ENCODE measurements at regions of chr15 and their contacts with region 1.

Region 1: DNA sequence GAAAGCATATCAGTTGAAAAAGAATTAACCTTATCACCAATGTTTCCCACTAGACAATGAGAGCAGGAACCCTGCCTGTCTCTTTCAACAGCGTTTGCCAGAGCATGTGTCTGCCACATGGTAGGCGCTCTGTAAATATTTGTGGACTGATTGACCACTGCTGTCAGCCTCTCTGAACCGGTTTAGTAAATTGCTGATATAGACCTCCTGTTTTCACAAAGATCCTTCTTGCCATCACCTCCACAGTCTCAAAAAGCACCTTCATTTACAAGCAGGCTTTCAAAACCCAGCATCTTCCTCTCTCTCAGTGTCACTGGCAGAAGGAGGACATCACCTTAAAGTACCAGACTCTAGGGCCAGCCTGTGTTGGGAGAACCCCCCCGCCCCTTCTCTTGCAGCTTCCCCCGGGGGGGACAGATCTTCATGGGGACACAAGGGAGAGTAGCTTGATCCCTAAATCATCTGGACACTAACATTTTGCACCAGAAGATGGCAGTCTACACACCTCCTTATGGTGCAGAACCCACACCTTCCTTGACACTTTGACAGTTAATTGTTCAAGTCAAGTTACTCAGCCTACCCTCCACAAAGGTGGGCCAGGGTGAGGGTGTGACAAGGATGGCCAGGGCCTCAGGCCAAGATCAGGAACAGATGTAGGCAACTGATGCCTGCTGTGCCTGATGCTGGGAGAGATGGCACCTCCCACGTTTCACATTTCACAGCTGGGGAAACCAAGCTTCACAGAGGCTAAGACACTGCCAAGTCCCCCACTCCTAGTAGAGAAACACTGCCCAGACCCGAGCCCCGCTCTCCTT is 37.8 kb upstream of the USP3 start:
- DNase-seq: peak; percentile 70
- ATAC-seq: peak; percentile 78
- H3K4me3 ChIP-seq: no peak overlapping the region
- H3K27ac ChIP-seq: no peak overlapping the region
- H3K4me1 ChIP-seq: peaks cover 16% of the 10 kb centered on the region
- H3K27me3 ChIP-seq: peaks cover 4% of the 10 kb centered on the region
- CTCF ChIP-seq: peak; percentile 69
- POLR2A ChIP-seq: 0 out of 2 replicates have a peak, but pooled peaks have one; percentile 33
- RAD21 ChIP-seq: peak; percentile 81

Region 2: GRCh38 chr15:63288778-63289378 is 177.7 kb before region 1 on chr15:
- CTCF ChIA-PET with region 1: interaction called, 3 read pairs
- POLR2A ChIA-PET with region 1: no interaction called
- dilution Hi-C with region 1: no loop called
- in situ Hi-C with region 1: no loop called
- intact Hi-C with region 1: loop called (anchors 5 kb)
- DNase-seq: peak; percentile 69
- ATAC-seq: peak; percentile 68
- H3K4me3 ChIP-seq: no peak overlapping the region
- H3K27ac ChIP-seq: no peak overlapping the region
- H3K4me1 ChIP-seq: peaks cover 2% of the 10 kb centered on the region; the same call in 1 of the 2 replicates
- H3K27me3 ChIP-seq: no peaks in the 10 kb centered on the region
- CTCF ChIP-seq: peak; percentile 86
- POLR2A ChIP-seq: no peak
- RAD21 ChIP-seq: peak; percentile 88

Region 3: DNA sequence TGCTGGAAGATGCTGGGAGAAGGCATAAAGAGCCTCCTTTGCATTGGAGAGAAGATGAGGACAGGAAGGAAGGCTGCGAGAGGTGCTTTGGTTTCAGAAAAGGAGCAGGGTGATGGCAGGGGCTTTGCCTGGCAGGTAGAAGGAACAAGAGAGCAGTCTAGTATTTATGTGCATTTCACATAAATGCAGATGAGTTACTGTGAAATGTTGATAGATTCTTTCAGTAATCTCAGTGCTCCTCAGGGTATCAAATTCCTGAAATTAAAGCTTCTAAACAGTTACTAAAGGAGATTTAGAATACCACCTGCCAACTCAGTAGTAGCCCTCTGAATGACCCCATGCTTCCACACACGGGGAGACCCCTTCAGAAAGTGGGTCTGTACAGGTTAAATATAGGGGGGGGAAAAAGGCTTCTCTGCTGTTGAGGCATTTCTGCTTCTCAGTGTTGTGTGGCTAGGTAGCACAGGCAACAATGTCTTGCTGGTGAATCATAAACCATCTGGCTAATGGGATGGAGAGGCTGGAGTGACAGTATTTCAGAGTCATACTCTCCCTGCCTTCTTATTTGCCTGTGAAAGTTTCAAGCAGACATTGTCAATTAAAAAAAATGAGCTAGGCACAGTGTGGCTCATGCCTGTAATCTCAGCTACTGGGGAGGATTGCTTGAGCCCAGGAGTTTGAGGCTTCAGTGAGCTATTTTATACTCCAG is 116.3 kb after region 1 on chr15:
- CTCF ChIA-PET with region 1: no interaction called
- POLR2A ChIA-PET with region 1: no interaction called
- dilution Hi-C with region 1: no loop called
- in situ Hi-C with region 1: no loop called
- intact Hi-C with region 1: loop called (anchors 10 kb)
- DNase-seq: peak; percentile 92
- ATAC-seq: peak; percentile 87
- H3K4me3 ChIP-seq: no peak overlapping the region
- H3K27ac ChIP-seq: no peak overlapping the region
- H3K4me1 ChIP-seq: peaks cover 11% of the 10 kb centered on the region
- H3K27me3 ChIP-seq: no peaks in the 10 kb centered on the region
- CTCF ChIP-seq: no peak
- POLR2A ChIP-seq: peak; percentile 36; the same call in 1 of the 2 replicates
- RAD21 ChIP-seq: no peak